ENCODE measurements at regions of chr11 and their contacts with region 1.

Region 1: DNA sequence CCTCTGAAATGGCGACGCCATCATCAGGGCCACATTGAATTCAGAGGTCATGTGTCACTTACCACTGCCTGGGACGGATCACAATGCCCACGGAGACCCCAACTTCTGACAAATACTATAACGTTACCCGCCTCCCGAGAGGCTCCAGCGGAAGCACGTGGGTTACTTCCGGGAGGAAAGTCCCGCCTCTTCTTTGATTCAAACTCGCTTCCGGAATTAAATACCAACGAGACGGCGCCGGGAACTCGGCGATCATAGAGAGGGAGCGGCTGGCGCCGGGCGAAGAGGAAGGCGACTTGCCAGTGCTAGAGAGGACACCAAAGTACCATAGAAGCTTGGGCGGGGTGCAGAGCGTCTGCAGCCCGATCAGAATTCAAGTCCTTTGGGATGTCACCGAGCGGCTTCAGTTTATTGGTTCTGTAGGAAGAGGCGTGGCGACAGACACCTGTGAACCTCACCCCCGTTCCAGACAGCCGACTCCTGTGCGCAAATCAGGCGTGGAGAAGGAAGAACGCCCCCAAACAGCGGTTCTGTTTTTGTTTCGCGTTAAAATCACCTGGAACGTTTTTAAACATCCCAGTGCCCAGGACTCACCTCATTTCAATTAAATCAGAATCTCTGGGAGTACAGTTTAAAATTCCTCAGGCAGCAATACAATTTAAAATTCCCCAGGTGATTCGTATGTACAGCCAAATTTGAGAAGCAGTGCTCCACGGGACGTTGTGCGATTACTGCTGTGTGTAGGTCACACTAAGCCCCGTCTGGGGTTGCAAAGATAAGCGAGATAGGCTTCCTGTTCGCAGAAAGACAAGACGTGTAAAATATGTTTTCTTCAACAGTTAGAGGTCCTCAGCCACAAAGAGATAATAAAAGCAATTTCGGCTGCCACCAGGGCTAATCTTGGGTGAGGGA is at the start of gene TIMM10:
- DNase-seq: peak; percentile 90 to 98 (median 96)
- H3K4me3 ChIP-seq: peak within 1 kb of the TSS; percentile 65 to 99 (median 89)
- H3K27ac ChIP-seq: peak within 1 kb of the TSS in 48 of 59 donors; percentile 4 to 84 (median 63)
- H3K27me3 ChIP-seq: no peaks in the 10 kb centered on the region
- CTCF ChIP-seq: peak in 50 of 56 donors; percentile 19 to 73 (median 46)
- total RNA-seq, gene TIMM10: 26.5 to 76.2 (median 48.8) TPM

Region 2: GRCh38 chr11:57324886-57325734 is 205.7 kb before region 1 on chr11 and contains the start of gene TNKS1BP1:
- intact Hi-C with region 1: loop called in 1 of 2 experiments (anchors 5 kb)
- DNase-seq: peak; percentile 88 to 97 (median 96)
- H3K4me3 ChIP-seq: peak within 1 kb of the TSS; percentile 54 to 90 (median 75)
- H3K27ac ChIP-seq: peak within 1 kb of the TSS; percentile 55 to 95 (median 88)
- H3K27me3 ChIP-seq: no peaks in the 10 kb centered on the region
- CTCF ChIP-seq: peak in 23 of 56 donors; percentile 4 to 39 (median 18)
- total RNA-seq, gene TNKS1BP1: 31.3 to 111 (median 55.2) TPM

Region 3: GRCh38 chr11:57345555-57346211 is 185.2 kb before region 1 on chr11:
- intact Hi-C with region 1: loop called (anchors 2 to 5 kb)
- DNase-seq: peak in 9 of 10 donors; percentile 49 to 80 (median 74)
- H3K4me3 ChIP-seq: no peak overlapping the region
- H3K27ac ChIP-seq: peak overlapping the region in 1 of 59 donors; percentile 22
- H3K27me3 ChIP-seq: no peaks in the 10 kb centered on the region
- CTCF ChIP-seq: peak; percentile 52 to 93 (median 86)

Region 4: DNA sequence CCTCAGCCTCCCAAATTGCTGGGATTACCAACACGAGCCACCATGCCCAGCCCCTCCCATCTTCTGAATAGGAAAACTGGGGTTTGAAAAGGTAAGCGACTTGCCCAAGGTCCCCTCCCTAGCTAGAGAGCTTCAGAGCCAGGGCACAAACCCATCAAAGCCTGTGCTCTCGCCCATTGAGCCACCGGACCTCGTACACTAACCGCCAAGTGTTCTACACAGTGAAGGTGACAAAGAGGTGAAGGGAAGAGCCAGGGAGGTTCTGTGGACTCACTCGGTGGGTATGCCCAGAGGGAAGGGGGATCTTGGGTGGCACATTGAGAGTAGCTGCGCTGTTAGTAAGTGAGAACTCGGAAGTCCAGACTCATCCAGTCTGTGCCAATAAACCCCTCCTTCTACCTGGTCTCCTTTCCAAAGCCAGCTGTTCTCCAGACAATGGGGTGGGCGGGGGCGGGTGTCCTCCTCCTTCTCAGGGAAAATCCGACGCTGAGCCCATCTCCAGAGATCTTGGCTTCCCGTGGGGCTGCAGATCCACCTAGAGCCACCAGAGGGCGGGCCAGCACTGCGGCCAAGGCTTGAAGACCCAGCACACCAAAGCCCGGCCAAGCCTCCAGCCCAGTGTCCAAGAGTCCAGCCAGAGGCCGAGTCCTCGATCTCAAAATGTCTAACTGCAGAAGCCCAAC is 73.8 kb before region 1 on chr11:
- intact Hi-C with region 1: loop called (anchors 1 to 2 kb)
- DNase-seq: peak; percentile 82 to 93 (median 90)
- H3K4me3 ChIP-seq: peak overlapping the region in 13 of 59 donors; percentile 7 to 69 (median 21)
- H3K27ac ChIP-seq: no peak overlapping the region
- H3K27me3 ChIP-seq: peaks cover 0 to 43% (median 13%) of the 10 kb centered on the region in 45 donors
- CTCF ChIP-seq: peak; percentile 90 to 99 (median 98)

Region 5: GRCh38 chr11:57491371-57492061 is 39.3 kb before region 1 on chr11:
- intact Hi-C with region 1: loop called in 1 of 2 experiments (anchors 2 kb)
- DNase-seq: no peak
- H3K4me3 ChIP-seq: no peak overlapping the region
- H3K27ac ChIP-seq: no peak overlapping the region
- H3K27me3 ChIP-seq: no peaks in the 10 kb centered on the region
- CTCF ChIP-seq: peak in 54 of 56 donors; percentile 18 to 69 (median 54)

Region 6: GRCh38 chr11:57567515-57568329 is 36.9 kb after region 1 on chr11 and contains the start of gene UBE2L6:
- intact Hi-C with region 1: loop called in 1 of 2 experiments (anchors 2 kb)
- DNase-seq: peak; percentile 51 to 84 (median 70)
- H3K4me3 ChIP-seq: peak within 1 kb of the TSS; percentile 65 to 98 (median 92)
- H3K27ac ChIP-seq: peak within 1 kb of the TSS; percentile 66 to 98 (median 92)
- H3K27me3 ChIP-seq: no peaks in the 10 kb centered on the region
- CTCF ChIP-seq: peak in 34 of 56 donors; percentile 77 to 95 (median 88)
- total RNA-seq, gene UBE2L6: 40.6 to 139 (median 59.0) TPM

Region 7: DNA sequence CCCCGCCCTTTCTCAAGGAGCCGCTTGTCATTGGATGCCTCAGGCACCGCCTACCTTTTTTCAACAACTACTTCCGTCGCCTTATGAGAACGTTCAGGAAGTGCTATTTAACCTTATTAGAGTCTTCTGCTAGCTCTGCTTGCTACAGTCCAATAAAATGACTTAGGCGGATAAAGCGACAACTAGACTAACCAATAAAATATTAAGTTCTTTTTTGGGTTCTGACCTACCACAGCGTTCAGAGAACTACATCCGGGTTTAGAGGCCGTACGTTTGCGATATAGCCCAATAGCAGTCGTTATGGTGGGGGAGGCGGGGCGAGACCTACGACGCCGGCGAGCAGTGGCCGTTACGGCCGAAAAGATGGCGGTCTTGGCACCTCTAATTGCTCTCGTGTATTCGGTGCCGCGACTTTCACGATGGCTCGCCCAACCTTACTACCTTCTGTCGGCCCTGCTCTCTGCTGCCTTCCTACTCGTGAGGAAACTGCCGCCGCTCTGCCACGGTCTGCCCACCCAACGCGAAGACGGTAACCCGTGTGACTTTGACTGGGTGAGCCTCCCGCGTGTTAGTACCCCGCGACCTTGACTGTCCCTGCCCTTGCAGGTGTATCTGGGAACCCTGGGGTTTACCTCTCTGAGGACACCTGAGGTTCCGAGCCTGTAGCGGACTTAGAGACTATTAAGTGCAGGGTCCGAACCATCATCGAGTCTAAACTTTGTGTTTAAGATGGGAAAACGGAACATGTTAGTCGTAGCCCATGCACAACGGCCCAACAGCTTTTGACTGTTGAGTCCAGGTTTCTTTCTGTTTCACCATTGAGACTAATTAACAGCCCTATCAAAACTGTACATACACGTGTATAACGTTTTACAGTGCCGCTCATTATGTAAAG is 181.7 kb after region 1 on chr11 and contains the start of gene TMX2:
- intact Hi-C with region 1: loop called in 1 of 2 experiments (anchors 2 kb)
- DNase-seq: peak; percentile 85 to 97 (median 94)
- H3K4me3 ChIP-seq: peak within 1 kb of the TSS; percentile 75 to 100 (median 98)
- H3K27ac ChIP-seq: peak within 1 kb of the TSS; percentile 51 to 96 (median 88)
- H3K27me3 ChIP-seq: no peaks in the 10 kb centered on the region
- CTCF ChIP-seq: peak in 15 of 56 donors; percentile 2 to 46 (median 13)
- total RNA-seq, gene TMX2: 68.4 to 114 (median 91.6) TPM

Region 8: GRCh38 chr11:57842873-57843272 is 312.0 kb after region 1 on chr11:
- intact Hi-C with region 1: no loop called
- DNase-seq: no peak
- H3K4me3 ChIP-seq: no peak overlapping the region
- H3K27ac ChIP-seq: no peak overlapping the region
- H3K27me3 ChIP-seq: no peaks in the 10 kb centered on the region
- CTCF ChIP-seq: no peak